ENCODE measurements at regions of chr7 and their contacts with region 1.

Region 1: GRCh38 chr7:99040104-99040958 is 103.6 kb downstream of the SMURF1 start:
- DNase-seq: peak; percentile 86
- ATAC-seq: peak; percentile 81
- H3K4me3 ChIP-seq: no peak overlapping the region
- H3K27ac ChIP-seq: peak overlapping the region; percentile 49
- H3K4me1 ChIP-seq: peaks cover 6% of the 10 kb centered on the region
- H3K27me3 ChIP-seq: no peaks in the 10 kb centered on the region
- CTCF ChIP-seq: peak; percentile 82
- POLR2A ChIP-seq: no peak
- RAD21 ChIP-seq: peak; percentile 88

Region 2: GRCh38 chr7:99021941-99022560 is 18.3 kb before region 1 on chr7:
- CTCF ChIA-PET with region 1: interaction called, 11 read pairs
- POLR2A ChIA-PET with region 1: interaction called, 4 read pairs
- dilution Hi-C with region 1: no loop called
- in situ Hi-C with region 1: no loop called
- intact Hi-C with region 1: no loop called
- DNase-seq: no peak
- ATAC-seq: no peak
- H3K4me3 ChIP-seq: no peak overlapping the region
- H3K27ac ChIP-seq: no peak overlapping the region
- H3K4me1 ChIP-seq: no peaks in the 10 kb centered on the region
- H3K27me3 ChIP-seq: no peaks in the 10 kb centered on the region
- CTCF ChIP-seq: no peak
- POLR2A ChIP-seq: no peak
- RAD21 ChIP-seq: no peak

Region 3: DNA sequence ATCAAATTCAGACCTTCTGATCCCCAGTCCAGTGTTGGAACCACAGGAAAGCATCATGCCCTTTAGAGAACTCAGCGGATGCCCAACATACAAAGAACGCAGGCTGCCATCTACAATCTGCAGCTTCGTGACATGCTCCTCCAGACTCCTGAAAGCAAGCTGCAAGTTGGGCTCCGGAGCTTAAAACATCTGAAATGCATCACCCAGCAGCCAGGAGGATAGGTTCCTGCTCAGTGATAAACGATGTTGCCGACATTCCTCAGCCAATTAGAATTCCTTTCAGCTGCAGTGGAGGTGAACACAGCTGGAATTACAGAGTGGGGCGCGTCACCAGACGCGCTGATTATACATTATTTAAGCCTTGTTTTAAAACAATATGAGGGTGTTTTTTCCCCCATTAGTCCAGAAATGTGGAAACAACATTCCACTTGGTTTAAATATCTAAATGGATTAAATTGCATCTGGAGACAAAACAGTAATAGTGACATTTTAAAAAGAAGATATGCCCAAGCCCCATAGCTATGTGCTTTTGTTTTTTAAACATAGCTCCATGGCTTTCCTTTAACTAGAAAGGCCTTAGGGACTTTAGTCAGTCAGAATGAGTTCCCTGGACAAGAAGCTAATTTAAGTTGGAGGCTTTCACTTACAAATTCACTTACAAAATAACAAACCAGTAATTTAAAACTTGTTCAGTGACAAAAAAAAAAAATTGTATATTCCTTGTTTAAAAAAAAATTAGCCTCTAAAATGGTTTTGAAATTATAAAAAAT is 97.3 kb after region 1 on chr7:
- CTCF ChIA-PET with region 1: no interaction called
- POLR2A ChIA-PET with region 1: no interaction called
- dilution Hi-C with region 1: no loop called
- in situ Hi-C with region 1: no loop called
- intact Hi-C with region 1: loop called (anchors 1 kb)
- DNase-seq: peak; percentile 90
- ATAC-seq: peak; percentile 63
- H3K4me3 ChIP-seq: peak overlapping the region; percentile 20; the same call in 1 of the 2 replicates
- H3K27ac ChIP-seq: peak overlapping the region; percentile 84
- H3K4me1 ChIP-seq: peaks cover 19% of the 10 kb centered on the region
- H3K27me3 ChIP-seq: no peaks in the 10 kb centered on the region
- CTCF ChIP-seq: no peak
- POLR2A ChIP-seq: no peak
- RAD21 ChIP-seq: peak; percentile 14; the same call in 1 of the 2 replicates

Region 4: GRCh38 chr7:99312316-99313203 is 272.2 kb after region 1 on chr7:
- CTCF ChIA-PET with region 1: interaction called, 6 read pairs
- POLR2A ChIA-PET with region 1: no interaction called
- dilution Hi-C with region 1: no loop called
- in situ Hi-C with region 1: loop called (anchors 5 kb)
- intact Hi-C with region 1: loop called (anchors 1 kb)
- DNase-seq: peak; percentile 52
- ATAC-seq: peak; percentile 85
- H3K4me3 ChIP-seq: no peak overlapping the region
- H3K27ac ChIP-seq: no peak overlapping the region
- H3K4me1 ChIP-seq: no peaks in the 10 kb centered on the region
- H3K27me3 ChIP-seq: no peaks in the 10 kb centered on the region
- CTCF ChIP-seq: peak; percentile 91
- POLR2A ChIP-seq: peak; percentile 48; the same call in 1 of the 2 replicates
- RAD21 ChIP-seq: peak; percentile 94

Region 5: GRCh38 chr7:99325545-99326407 is 285.4 kb after region 1 on chr7 and contains the start of gene ARPC1A:
- CTCF ChIA-PET with region 1: no interaction called
- POLR2A ChIA-PET with region 1: no interaction called
- dilution Hi-C with region 1: no loop called
- in situ Hi-C with region 1: no loop called
- intact Hi-C with region 1: loop called (anchors 5 kb)
- DNase-seq: peak; percentile 91
- ATAC-seq: peak; percentile 94
- H3K4me3 ChIP-seq: peak within 1 kb of the TSS; percentile 82
- H3K27ac ChIP-seq: peak within 1 kb of the TSS; percentile 86
- H3K4me1 ChIP-seq: 0 out of 2 replicates have a peak, but pooled peaks cover 2% of the 10 kb centered on the region
- H3K27me3 ChIP-seq: no peaks in the 10 kb centered on the region
- CTCF ChIP-seq: peak; percentile 33
- POLR2A ChIP-seq: peak; percentile 75
- RAD21 ChIP-seq: peak; percentile 36
- total RNA-seq, gene ARPC1A: 321 and 327 TPM in 2 replicates

Measured in IMR-90 (cell line).